ENCODE measurements at regions of chr9 and their contacts with region 1.

Region 1: GRCh38 chr9:84947363-84947972 is 277.9 kb downstream of the NTRK2 start:
- DNase-seq: peak; percentile 91
- H3K4me3 Mint-ChIP-seq: no peak overlapping the region
- H3K27ac Mint-ChIP-seq: peak overlapping the region; percentile 82
- H3K4me1 Mint-ChIP-seq: peaks cover 14% of the 10 kb centered on the region
- H3K27me3 Mint-ChIP-seq: no peaks in the 10 kb centered on the region
- CTCF ChIP-seq: no peak

Region 2: GRCh38 chr9:84851935-84852585 is 95.4 kb before region 1 on chr9:
- CTCF ChIA-PET with region 1: interaction called, 3 read pairs
- POLR2A ChIA-PET with region 1: interaction called, 13 read pairs
- intact Hi-C with region 1: no loop called
- DNase-seq: peak; percentile 98
- H3K4me3 Mint-ChIP-seq: no peak overlapping the region
- H3K27ac Mint-ChIP-seq: peak overlapping the region; percentile 66
- H3K4me1 Mint-ChIP-seq: peaks cover 27% of the 10 kb centered on the region
- H3K27me3 Mint-ChIP-seq: no peaks in the 10 kb centered on the region
- CTCF ChIP-seq: no peak

Region 3: GRCh38 chr9:84959339-84959738 is 11.9 kb after region 1 on chr9:
- CTCF ChIA-PET with region 1: no interaction called
- POLR2A ChIA-PET with region 1: no interaction called
- intact Hi-C with region 1: no loop called
- DNase-seq: no peak
- H3K4me3 Mint-ChIP-seq: no peak overlapping the region
- H3K27ac Mint-ChIP-seq: no peak overlapping the region
- H3K4me1 Mint-ChIP-seq: peaks cover under 1% of the 10 kb centered on the region
- H3K27me3 Mint-ChIP-seq: no peaks in the 10 kb centered on the region
- CTCF ChIP-seq: no peak

Region 4: DNA sequence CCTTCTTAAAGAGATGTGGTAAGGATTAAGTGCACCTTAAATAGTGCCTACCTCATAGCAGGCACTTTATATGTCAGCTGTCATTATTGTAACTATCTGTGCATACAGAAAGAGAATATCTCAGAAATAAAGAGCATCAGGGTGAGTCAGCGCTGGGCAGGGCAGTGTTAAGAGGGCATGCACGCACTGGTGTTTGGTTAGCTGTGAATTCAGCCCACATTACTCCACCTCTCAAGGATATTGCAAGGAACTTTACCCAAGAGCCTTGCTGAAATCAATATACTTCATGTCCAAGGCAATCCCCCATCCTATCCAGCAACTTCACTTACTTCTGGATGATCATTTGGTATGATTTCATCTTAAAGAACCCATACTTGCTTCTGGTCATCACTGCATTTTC is 23.0 kb after region 1 on chr9:
- CTCF ChIA-PET with region 1: interaction called, 3 read pairs
- POLR2A ChIA-PET with region 1: interaction called, 13 read pairs
- intact Hi-C with region 1: no loop called
- DNase-seq: peak; percentile 83
- H3K4me3 Mint-ChIP-seq: no peak overlapping the region
- H3K27ac Mint-ChIP-seq: peak overlapping the region; percentile 37
- H3K4me1 Mint-ChIP-seq: peaks cover 28% of the 10 kb centered on the region
- H3K27me3 Mint-ChIP-seq: no peaks in the 10 kb centered on the region
- CTCF ChIP-seq: no peak

Region 5: GRCh38 chr9:85276741-85277140 is 329.3 kb after region 1 on chr9:
- CTCF ChIA-PET with region 1: no interaction called
- POLR2A ChIA-PET with region 1: no interaction called
- intact Hi-C with region 1: no loop called
- DNase-seq: no peak
- H3K4me3 Mint-ChIP-seq: no peak overlapping the region
- H3K27ac Mint-ChIP-seq: no peak overlapping the region
- H3K4me1 Mint-ChIP-seq: no peaks in the 10 kb centered on the region
- H3K27me3 Mint-ChIP-seq: peaks cover 33% of the 10 kb centered on the region
- CTCF ChIP-seq: no peak

Measured in MCF 10A (cell line).